Testis (tissue), 5 donors: ENCODE measurements at regions of chr9 and their contacts with region 1.

Region 1: GRCh38 chr9:130940693-130941576 is 1.9 kb upstream of the FIBCD1 start:
- DNase-seq: peak; percentile 86
- H3K4me3 ChIP-seq: no peak overlapping the region
- H3K27ac ChIP-seq: no peak overlapping the region
- H3K4me1 ChIP-seq: peaks cover 25% of the 10 kb centered on the region
- H3K27me3 ChIP-seq: no peaks in the 10 kb centered on the region
- CTCF ChIP-seq: peak; percentile 62 to 87 (median 81)
- POLR2A ChIP-seq: no peak

Region 2: GRCh38 chr9:129838707-129839259 is 1102.2 kb before region 1 on chr9:
- intact Hi-C with region 1: no loop called
- DNase-seq: no peak
- H3K4me3 ChIP-seq: no peak overlapping the region
- H3K27ac ChIP-seq: no peak overlapping the region
- H3K4me1 ChIP-seq: peaks cover 18% of the 10 kb centered on the region
- H3K27me3 ChIP-seq: no peaks in the 10 kb centered on the region
- CTCF ChIP-seq: no peak
- POLR2A ChIP-seq: no peak

Region 3: DNA sequence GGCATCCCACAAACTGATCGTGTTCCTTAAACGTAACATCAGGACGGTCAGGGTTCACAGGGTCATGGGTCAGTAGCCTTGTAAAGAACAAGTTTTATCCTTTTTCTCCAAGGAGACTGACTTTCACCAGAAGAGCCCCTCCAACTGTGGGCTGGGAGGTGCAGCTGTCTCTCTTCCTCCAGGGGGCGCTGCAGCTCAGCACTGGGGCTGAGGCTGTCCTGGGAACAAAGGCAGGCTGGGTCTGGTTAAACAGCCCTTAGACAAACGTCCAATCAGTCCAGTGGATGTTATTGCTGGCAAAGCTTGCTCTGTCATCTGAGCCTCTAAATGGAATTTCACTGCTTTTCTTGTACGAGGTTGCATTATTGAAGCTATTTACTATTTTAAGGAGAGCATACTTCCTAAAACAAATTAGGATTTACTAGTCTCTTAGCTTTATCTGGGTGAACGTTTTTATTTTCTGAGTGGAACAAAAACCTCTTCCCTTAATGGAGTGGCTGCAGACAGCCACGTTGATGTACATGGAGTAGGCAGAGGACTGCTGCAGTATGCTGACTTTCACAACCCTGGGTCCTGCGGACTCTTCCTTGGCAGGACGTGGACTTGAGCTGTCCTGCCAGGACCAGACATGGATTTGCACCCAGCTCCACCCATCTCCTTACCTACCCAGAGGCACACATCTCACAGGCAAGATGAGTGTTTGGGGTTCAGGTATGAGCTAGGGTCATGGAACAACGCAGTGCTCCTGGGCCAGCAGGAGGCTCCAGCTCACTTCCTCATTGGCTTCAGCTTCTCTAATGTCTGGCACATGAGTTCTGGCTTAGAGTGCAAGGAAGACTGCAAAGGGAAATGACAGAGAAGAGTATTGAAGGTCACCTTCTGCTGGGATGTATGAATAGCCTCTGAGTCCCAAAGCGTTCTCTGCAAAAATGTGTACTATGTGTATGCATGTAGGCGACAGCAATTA is 239.6 kb before region 1 on chr9:
- intact Hi-C with region 1: loop called (anchors 10 kb)
- DNase-seq: peak; percentile 88
- H3K4me3 ChIP-seq: no peak overlapping the region
- H3K27ac ChIP-seq: peak overlapping the region in 1 of 2 donors; percentile 27
- H3K4me1 ChIP-seq: peaks cover 12% of the 10 kb centered on the region
- H3K27me3 ChIP-seq: no peaks in the 10 kb centered on the region
- CTCF ChIP-seq: peak; percentile 88 to 98 (median 91)
- POLR2A ChIP-seq: no peak

Region 4: GRCh38 chr9:130794923-130795495 is 145.9 kb before region 1 on chr9:
- intact Hi-C with region 1: no loop called
- DNase-seq: no peak
- H3K4me3 ChIP-seq: no peak overlapping the region
- H3K27ac ChIP-seq: peak overlapping the region in 1 of 2 donors; percentile 44
- H3K4me1 ChIP-seq: no peaks in the 10 kb centered on the region
- H3K27me3 ChIP-seq: no peaks in the 10 kb centered on the region
- CTCF ChIP-seq: no peak
- POLR2A ChIP-seq: no peak

Region 5: GRCh38 chr9:130866474-130866965 is 74.4 kb before region 1 on chr9:
- intact Hi-C with region 1: loop called (anchors 10 kb)
- DNase-seq: peak; percentile 88
- H3K4me3 ChIP-seq: no peak overlapping the region
- H3K27ac ChIP-seq: no peak overlapping the region
- H3K4me1 ChIP-seq: peaks cover 22% of the 10 kb centered on the region
- H3K27me3 ChIP-seq: no peaks in the 10 kb centered on the region
- CTCF ChIP-seq: peak; percentile 82 to 86 (median 85)
- POLR2A ChIP-seq: no peak